ENCODE measurements at regions of chr4 and their contacts with region 1.

Region 1: DNA sequence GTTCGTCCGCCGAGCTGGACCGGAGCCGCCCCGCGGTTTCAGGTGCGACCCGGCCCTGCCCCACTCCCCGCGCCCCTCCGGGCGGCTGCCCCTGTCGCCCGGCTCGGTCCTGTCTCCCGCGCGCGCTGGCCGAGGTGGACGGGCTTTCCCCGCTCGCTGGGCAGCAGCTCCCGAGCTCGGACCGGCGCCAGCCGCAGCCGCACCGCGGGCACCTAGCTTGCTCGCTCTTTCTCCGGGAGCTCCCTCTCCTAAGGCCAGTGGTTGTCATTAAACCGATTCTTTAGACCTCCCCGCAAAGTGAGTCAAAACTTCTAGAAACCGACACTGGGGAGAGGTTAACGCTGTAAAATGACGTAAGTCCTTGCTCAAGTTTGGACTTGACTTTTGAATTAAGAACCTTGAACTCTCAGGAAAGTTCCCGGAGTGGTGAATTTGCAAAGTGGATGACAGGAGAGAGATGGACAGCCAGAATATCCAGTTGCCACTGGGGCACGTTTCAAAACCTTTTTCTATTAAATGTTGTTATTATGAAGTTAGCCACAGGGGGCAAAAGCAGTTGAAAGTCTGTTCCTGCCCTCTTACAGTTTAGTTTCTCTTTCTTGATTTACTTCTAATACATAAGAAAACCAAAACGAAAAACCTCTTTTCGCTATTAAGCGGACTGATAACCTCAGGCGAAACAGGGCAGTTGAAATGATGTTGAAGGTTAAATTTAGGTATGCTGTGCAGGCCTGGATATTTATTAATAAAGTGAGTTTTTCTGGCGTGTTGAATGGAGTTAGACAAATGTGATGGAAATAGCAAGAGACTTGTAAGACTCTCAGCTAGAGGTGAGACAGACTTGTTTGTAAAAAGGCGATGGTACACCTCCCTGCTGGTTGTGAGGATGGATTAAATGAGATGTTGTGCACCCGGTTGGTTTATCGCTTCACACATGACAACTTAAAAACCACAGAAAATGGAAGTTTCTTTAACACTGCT is 847 bp downstream of the PI4K2B start:
- H3K4me3 Mint-ChIP-seq: peak overlapping the region; percentile 94
- H3K27ac Mint-ChIP-seq: peak overlapping the region; percentile 90
- H3K4me1 Mint-ChIP-seq: peaks cover 17% of the 10 kb centered on the region
- H3K27me3 Mint-ChIP-seq: no peaks in the 10 kb centered on the region

Region 2: DNA sequence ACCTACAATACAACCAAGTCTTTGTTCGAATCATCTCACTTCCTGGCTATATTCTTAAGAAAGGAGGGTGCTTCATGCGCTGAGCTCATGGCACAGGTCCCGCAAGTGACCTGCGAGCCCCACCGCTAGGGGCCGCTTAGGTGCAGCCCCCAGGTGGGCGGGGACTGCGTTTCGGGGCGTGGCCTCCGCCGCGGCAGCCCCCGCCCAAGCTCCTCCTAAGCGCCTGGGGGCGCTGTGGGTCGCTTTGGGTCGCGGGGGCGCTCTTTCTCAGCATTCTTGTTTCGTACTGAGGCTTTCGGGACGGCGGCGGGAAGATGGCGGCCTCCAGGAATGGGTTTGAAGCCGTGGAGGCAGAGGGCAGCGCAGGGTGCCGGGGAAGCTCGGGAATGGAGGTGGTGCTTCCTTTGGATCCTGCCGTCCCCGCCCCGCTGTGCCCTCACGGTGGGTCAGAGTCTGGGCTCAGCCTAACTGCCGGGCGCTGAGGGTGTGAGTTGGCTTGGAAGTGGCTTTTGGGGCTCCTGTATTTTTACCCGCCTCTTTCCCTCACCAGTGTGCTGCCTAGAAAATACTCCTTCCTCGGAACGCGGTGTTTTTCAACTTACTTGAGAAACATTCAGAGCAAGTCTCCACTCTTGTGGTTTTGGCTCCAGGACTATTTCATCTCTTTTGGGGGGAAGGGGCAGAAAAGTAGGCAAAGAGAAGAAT is 78.0 kb after region 1 on chr4 and contains the start of gene ZCCHC4:
- intact Hi-C with region 1: loop called (anchors 2 kb)
- H3K4me3 Mint-ChIP-seq: peak within 1 kb of the TSS; percentile 98
- H3K27ac Mint-ChIP-seq: peak within 1 kb of the TSS; percentile 91
- H3K4me1 Mint-ChIP-seq: peaks cover 39% of the 10 kb centered on the region
- H3K27me3 Mint-ChIP-seq: no peaks in the 10 kb centered on the region

Measured in dendritic cell treated with granulocyte-macrophage colony-stimulating factor and Interleukin-4, amounts not matched to agents 40 ng/mL and 50 ng/mL, for 4 days (primary cell).